Caki2 (cell line): ENCODE measurements at regions of chr4 and their contacts with region 1.

Region 1: DNA sequence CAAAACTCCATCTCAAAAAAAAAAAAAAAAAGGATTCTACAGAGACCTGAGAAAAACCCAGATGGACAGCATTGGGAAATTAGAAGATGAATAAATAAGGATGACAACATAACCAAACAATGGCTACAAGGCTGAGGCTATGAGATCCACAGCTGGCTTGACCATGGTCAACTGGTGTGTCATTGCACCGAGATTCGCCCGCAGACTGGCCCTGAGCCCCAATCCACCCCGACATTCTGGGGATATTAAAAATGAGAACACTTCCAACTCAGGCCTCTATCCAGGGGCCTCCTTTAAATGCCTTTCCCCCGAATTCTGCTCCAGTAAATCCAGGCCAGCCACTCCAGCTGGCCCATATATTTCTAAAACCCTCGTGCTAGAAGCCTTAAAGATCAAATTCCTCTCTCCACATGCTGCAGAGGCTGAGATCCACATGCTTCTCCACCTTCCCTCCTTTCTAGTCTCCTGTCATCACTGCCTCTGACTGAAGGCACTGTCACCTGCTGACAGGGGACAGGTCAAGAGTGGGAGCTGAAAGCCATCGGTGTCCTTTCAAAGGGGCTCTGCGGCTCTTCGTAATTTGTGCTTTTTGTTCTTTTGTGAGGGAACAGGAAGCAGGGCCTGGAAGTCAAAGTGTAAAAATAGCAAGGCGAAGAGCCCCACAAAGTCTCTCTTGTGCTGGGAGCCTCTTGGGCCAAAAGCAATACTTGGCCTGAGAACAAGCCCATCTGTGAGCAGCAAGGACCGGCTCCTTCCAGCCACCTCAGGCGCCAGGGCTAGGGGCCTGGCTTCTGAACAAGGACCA is 203.7 kb downstream of the NSUN7 start:
- DNase-seq: no peak

Region 2: GRCh38 chr4:41079871-41080560 is 126.5 kb after region 1 on chr4:
- in situ Hi-C with region 1: no loop called
- DNase-seq: no peak

Region 3: DNA sequence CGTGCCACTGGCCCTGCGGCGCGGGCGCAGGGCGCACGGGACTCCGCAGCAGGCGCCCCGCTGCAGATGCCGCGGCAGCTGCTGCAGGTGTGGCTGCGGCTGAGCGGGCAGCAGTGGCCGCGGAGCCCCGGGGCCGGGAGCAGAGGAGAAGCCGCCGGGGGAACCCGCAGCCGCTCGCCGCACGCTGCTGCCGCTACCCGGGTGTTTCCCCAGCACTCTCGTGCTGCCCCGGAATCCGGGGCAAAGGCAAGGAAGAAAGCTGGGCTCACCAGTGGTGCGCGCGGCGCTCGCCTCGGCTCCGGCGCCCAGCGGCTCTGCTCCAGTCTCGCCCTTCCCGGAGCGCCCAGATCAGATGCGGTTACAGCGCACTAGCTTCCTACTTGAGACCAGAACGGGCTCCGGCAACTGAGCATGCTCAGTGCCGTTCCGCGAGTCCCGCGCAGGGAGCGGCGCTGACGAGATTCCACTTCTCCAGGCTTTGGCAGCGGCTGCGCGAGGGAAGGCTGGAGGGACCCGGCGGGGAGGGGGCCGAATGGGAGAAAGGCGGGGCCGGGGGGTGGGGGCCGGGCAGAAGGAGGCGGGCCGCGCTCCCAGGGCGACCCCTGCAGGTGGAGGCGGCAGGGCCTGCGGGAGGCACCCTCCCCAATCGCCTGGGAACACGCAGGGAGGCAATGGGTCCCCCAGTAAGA is 260.8 kb after region 1 on chr4 and contains the start of gene APBB2:
- in situ Hi-C with region 1: loop called (anchors 25 kb)
- DNase-seq: peak; percentile 92
- total RNA-seq, gene APBB2: 19.8 and 24.3 TPM in 2 replicates